ENCODE measurements at regions of chr11 and their contacts with region 1.

Region 1: GRCh38 chr11:77820563-77821348 is at the starts of genes AAMDC and RSF1:
- DNase-seq: peak; percentile 89 to 98 (median 97)
- ATAC-seq: peak; percentile 92
- H3K4me3 ChIP-seq: peak within 1 kb of the TSS; percentile 97
- H3K4me3 Mint-ChIP-seq: peak within 1 kb of the TSS; percentile 89 to 100 (median 98)
- H3K27ac ChIP-seq: peak within 1 kb of the TSS; percentile 84
- H3K27ac Mint-ChIP-seq: peak within 1 kb of the TSS; percentile 93 to 99 (median 95)
- H3K4me1 ChIP-seq: peaks cover 28 to 30% of the 10 kb centered on the region in 2 donors
- H3K4me1 Mint-ChIP-seq: peaks cover 27 to 48% (median 42%) of the 10 kb centered on the region in 7 donors
- H3K27me3 ChIP-seq: no peaks in the 10 kb centered on the region
- H3K27me3 Mint-ChIP-seq: peaks cover 0 to 2% (median 0%) of the 10 kb centered on the region in 5 donors
- total RNA-seq, gene AAMDC: 5.2 to 9.2 (median 6.5) TPM
- total RNA-seq, gene RSF1: 59.0 to 113 (median 88.9) TPM

Region 2: DNA sequence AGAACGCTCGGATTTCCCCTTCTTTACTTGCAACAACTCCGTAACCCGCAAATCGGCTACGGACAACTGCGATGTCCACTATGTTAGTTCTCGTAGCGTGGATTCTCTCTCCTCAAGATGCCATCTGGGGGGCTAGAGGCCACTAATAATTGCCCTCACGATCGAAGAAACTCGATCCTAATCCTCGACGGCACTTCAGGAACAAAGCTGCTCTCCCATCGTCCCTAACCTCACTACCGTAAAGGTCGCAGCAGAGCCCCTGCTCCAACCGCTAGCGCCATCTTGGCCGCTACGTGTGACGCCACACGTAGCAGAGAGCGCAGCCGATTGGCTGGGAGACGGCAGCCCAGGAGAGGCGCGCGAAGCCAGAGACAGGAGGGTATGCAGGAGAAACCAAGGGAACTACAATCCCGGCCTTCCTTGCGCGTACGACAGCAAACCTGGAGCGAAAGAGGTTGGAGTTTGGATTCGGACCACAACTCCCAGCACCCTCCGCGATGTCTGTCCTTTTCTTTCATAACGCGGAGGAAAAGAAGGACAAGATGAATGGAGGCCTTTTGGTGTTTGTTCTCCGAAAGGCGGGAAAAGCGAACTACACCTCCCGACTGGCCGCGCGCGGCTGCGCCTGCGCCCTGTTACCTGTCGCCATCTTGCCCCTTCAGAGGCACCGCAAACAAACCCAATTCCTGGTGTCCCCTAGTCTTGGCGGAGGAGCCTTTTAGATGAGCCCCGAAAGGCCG is 1376.2 kb before region 1 on chr11 and contains the start of gene EMSY:
- CTCF ChIA-PET with region 1: no interaction called
- POLR2A ChIA-PET with region 1: no interaction called
- intact Hi-C with region 1: loop called in 1 of 2 experiments (anchors 10 kb)
- DNase-seq: peak; percentile 73 to 95 (median 92)
- ATAC-seq: peak; percentile 96
- H3K4me3 ChIP-seq: peak within 1 kb of the TSS; percentile 95
- H3K4me3 Mint-ChIP-seq: peak within 1 kb of the TSS; percentile 91 to 99 (median 96)
- H3K27ac ChIP-seq: peak within 1 kb of the TSS; percentile 92
- H3K27ac Mint-ChIP-seq: peak within 1 kb of the TSS; percentile 91 to 98 (median 97)
- H3K4me1 ChIP-seq: peaks cover 12 to 19% of the 10 kb centered on the region in 2 donors
- H3K4me1 Mint-ChIP-seq: peaks cover 29 to 58% (median 44%) of the 10 kb centered on the region in 7 donors
- H3K27me3 ChIP-seq: no peaks in the 10 kb centered on the region
- H3K27me3 Mint-ChIP-seq: no peaks in the 10 kb centered on the region
- total RNA-seq, gene EMSY: 35.5 to 49.0 (median 40.0) TPM

Region 3: GRCh38 chr11:77473801-77474683 is 346.7 kb before region 1 on chr11 and contains the start of gene PAK1:
- CTCF ChIA-PET with region 1: no interaction called
- POLR2A ChIA-PET with region 1: no interaction called
- intact Hi-C with region 1: loop called in 1 of 2 experiments (anchors 1 kb)
- DNase-seq: peak; percentile 79 to 96 (median 85)
- ATAC-seq: peak; percentile 89
- H3K4me3 ChIP-seq: peak within 1 kb of the TSS; percentile 43
- H3K4me3 Mint-ChIP-seq: peak within 1 kb of the TSS; percentile 85 to 99 (median 92)
- H3K27ac ChIP-seq: peak within 1 kb of the TSS; percentile 75
- H3K27ac Mint-ChIP-seq: peak within 1 kb of the TSS; percentile 87 to 100 (median 96)
- H3K4me1 ChIP-seq: no peaks in the 10 kb centered on the region
- H3K4me1 Mint-ChIP-seq: peaks cover 12 to 29% (median 23%) of the 10 kb centered on the region in 7 donors
- H3K27me3 ChIP-seq: no peaks in the 10 kb centered on the region
- H3K27me3 Mint-ChIP-seq: peaks cover 0 to 37% (median 0%) of the 10 kb centered on the region in 5 donors
- total RNA-seq, gene PAK1: 18.9 to 67.2 (median 23.3) TPM

Region 4: DNA sequence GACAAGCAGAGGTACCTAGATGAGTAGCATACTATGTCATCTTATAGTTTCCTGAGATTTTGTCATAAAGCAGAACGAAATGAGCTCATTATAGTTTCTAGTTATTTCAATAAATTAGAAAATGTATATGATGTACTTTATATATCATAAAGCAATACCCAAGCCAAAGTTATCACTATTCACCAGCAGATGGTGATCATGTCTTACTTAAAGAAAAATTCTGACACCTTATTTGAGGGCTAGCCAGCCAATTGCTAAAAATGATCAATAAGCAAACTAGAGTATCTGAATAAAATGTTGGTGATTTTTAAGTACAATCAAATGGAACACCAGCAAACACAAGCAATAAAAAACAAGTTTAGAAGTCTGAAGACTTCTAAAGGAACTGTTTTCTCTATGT is 44.3 kb before region 1 on chr11:
- CTCF ChIA-PET with region 1: interaction called, 3 read pairs
- POLR2A ChIA-PET with region 1: interaction called, 4 read pairs
- intact Hi-C with region 1: loop called (anchors 1 to 2 kb)
- DNase-seq: peak in 6 of 9 donors; percentile 11 to 42 (median 25)
- ATAC-seq: no peak
- H3K4me3 ChIP-seq: no peak overlapping the region
- H3K4me3 Mint-ChIP-seq: no peak overlapping the region
- H3K27ac ChIP-seq: no peak overlapping the region
- H3K27ac Mint-ChIP-seq: peak overlapping the region in 1 of 9 donors; percentile 2
- H3K4me1 ChIP-seq: peaks cover 7 to 17% of the 10 kb centered on the region in 2 donors
- H3K4me1 Mint-ChIP-seq: peaks cover 21 to 86% (median 69%) of the 10 kb centered on the region in 7 donors
- H3K27me3 ChIP-seq: no peaks in the 10 kb centered on the region
- H3K27me3 Mint-ChIP-seq: no peaks in the 10 kb centered on the region

Region 5: GRCh38 chr11:78079232-78080083 is 258.7 kb after region 1 on chr11 and contains the start of gene NDUFC2:
- CTCF ChIA-PET with region 1: no interaction called
- POLR2A ChIA-PET with region 1: no interaction called
- intact Hi-C with region 1: loop called (anchors 1 to 2 kb)
- DNase-seq: peak; percentile 37 to 73 (median 61)
- ATAC-seq: peak; percentile 90
- H3K4me3 ChIP-seq: peak within 1 kb of the TSS; percentile 99
- H3K4me3 Mint-ChIP-seq: peak within 1 kb of the TSS; percentile 92 to 98 (median 95)
- H3K27ac ChIP-seq: peak within 1 kb of the TSS; percentile 83
- H3K27ac Mint-ChIP-seq: peak within 1 kb of the TSS; percentile 90 to 97 (median 95)
- H3K4me1 ChIP-seq: peaks cover 38 to 43% of the 10 kb centered on the region in 2 donors
- H3K4me1 Mint-ChIP-seq: peaks cover 41 to 68% (median 53%) of the 10 kb centered on the region in 7 donors
- H3K27me3 ChIP-seq: no peaks in the 10 kb centered on the region
- H3K27me3 Mint-ChIP-seq: no peaks in the 10 kb centered on the region
- total RNA-seq, gene NDUFC2: 43.4 to 189 (median 64.7) TPM

Region 6: GRCh38 chr11:78295991-78296935 is 475.5 kb after region 1 on chr11:
- CTCF ChIA-PET with region 1: no interaction called
- POLR2A ChIA-PET with region 1: no interaction called
- intact Hi-C with region 1: no loop called
- DNase-seq: no peak
- ATAC-seq: no peak
- H3K4me3 ChIP-seq: no peak overlapping the region
- H3K4me3 Mint-ChIP-seq: no peak overlapping the region
- H3K27ac ChIP-seq: no peak overlapping the region
- H3K27ac Mint-ChIP-seq: peak overlapping the region in 1 of 9 donors; percentile 41
- H3K4me1 ChIP-seq: peaks cover 0 to 5% of the 10 kb centered on the region in 2 donors
- H3K4me1 Mint-ChIP-seq: peaks cover 10 to 51% (median 15%) of the 10 kb centered on the region in 7 donors
- H3K27me3 ChIP-seq: no peaks in the 10 kb centered on the region
- H3K27me3 Mint-ChIP-seq: no peaks in the 10 kb centered on the region

Region 7: DNA sequence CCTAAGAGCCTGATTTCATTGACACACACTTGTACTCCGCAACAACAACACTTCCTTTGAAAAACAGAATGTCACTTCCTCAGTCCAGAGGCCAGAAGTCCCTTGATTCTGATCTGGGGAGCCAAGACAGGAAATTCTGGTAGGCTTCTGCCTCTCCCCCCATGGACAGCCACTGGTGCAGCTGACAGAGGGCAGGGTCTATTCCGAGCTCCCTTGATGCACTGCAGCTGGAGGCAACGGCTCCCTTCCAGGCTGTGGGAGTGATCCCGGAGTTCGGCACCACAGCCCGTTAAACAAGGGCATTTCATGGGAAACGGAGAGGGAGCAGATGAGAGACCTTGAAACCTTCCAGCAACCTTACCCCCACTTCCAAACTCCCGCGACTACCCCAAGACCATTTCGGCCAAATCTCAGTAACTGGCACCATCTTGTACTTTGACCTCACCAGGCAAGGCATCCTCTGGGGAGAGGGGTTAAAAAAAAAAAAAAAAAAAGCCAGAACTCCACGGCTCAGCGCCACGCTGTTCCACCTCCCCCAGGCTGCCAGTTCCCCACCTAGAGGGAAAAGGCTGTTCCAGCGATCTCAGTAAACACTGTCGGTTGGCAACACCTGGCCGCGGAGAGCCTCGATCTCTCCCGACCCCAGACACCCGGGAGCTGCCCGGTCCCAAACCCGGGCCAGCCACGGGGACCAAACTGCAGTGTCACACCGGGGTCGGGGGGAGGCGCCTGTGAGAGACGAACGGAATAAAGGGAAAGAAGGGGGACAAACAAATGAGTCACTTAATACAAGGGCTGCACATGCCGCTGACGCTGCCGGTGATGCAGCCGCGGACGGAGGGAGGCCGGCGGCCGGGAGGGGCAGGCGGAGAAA is 595.8 kb after region 1 on chr11:
- CTCF ChIA-PET with region 1: no interaction called
- POLR2A ChIA-PET with region 1: no interaction called
- intact Hi-C with region 1: loop called (anchors 1 to 2 kb)
- DNase-seq: peak; percentile 37 to 83 (median 62)
- ATAC-seq: peak; percentile 69
- H3K4me3 ChIP-seq: peak overlapping the region; percentile 62
- H3K4me3 Mint-ChIP-seq: peak overlapping the region; percentile 83 to 97 (median 92)
- H3K27ac ChIP-seq: peak overlapping the region; percentile 17
- H3K27ac Mint-ChIP-seq: peak overlapping the region; percentile 12 to 97 (median 73)
- H3K4me1 ChIP-seq: peaks cover 8 to 17% of the 10 kb centered on the region in 2 donors
- H3K4me1 Mint-ChIP-seq: peaks cover 21 to 68% (median 26%) of the 10 kb centered on the region in 7 donors
- H3K27me3 ChIP-seq: no peaks in the 10 kb centered on the region
- H3K27me3 Mint-ChIP-seq: peaks cover 15 to 26% (median 19%) of the 10 kb centered on the region in 5 donors

Measured in naive thymus-derived CD4-positive, alpha-beta T cell (primary cell).